ENCODE measurements at regions of chr1 and their contacts with region 1.

Region 1: DNA sequence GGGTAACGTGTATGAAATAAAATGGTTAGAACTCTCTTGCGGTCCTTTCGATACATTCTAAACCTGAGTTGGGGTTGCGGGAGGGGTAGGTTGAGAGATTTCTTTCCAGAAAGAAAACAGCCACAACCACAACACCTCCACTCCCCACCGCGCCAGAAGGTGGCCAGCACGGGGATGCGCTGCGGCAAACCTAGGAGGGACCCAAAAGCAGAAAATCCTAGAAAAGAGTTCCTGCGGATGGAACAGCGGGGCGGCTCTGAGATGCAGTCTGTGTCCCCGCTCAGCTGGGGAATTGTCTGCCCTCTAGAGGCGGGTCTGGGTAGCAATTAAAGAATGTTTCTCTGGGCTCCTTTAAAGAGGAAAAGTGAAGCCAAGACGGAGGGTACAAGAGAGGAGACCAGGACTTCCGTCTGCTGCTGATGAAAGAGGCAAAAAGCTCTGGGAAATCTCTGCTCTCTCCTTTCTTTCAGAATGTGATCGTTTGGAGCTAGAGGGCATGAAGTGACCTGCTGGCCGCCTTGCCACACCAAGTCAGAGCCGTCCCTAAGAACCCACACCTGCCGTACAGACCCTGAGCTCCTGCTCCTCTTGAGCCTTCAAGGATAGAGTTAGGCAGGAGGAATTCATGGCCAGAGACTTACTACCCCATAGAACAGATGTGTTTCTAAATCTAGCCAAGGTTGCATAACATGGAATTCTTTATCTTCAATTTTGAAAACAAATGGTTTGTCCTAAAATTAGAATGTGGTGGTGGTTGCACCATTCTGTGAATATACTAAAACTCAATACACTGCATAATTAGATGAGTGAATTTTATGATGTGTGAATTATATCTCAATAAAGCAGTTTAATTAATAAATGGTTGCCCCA is 46.5 kb upstream of the COA6 start:
- DNase-seq: peak; percentile 45 to 86 (median 71)
- ATAC-seq: peak; percentile 91
- H3K4me3 ChIP-seq: peak overlapping the region; percentile 73
- H3K4me3 Mint-ChIP-seq: peak overlapping the region; percentile 93
- H3K27ac ChIP-seq: peak overlapping the region; percentile 24 to 72
- H3K27ac Mint-ChIP-seq: peak overlapping the region; percentile 85
- H3K4me1 ChIP-seq: peaks cover 12% of the 10 kb centered on the region
- H3K4me1 Mint-ChIP-seq: peaks cover 25% of the 10 kb centered on the region
- H3K27me3 ChIP-seq: peaks cover 0 to 6% of the 10 kb centered on the region in 2 experiments
- H3K27me3 Mint-ChIP-seq: peaks cover 14% of the 10 kb centered on the region
- CTCF ChIP-seq: peak; percentile 87

Region 2: DNA sequence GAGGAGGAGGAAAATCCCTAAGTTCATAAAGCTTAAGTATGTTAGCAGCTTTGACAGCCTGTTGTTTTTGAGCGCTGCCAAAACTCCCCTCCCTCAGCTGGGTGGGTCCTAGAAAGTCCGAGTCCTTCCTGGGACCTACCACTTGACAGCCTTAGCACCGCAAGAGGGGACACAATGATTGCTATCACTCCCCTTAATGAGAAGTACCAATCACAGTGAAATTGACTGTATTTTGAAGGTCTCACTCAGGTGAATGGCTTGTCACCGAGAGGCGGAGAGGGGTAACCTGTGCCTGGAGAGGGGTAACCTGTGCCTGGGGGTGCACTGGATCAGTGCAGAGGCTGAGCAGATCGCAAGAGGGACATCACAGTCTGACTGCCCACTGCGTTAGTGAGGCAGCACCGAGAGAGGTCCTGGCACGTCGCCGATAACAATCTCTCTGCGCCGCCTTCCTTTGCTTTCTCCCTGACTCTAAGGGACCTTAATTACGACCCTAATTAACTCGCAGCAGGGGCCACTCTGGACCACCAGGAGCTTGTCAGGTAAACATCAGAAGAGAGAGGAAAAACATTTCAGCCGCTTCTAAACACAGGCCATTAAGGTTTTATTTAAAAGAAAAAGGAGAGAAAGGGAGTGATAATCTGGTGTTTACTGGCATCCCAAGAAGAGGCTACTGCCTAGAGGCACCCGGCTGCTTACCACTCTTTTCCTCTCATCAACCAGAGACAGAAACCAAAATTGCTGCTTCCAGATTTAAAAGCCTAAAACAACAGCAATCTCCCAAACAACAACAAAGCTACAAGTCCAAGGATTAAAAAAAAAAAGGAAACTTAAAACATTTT is 738.6 kb before region 1 on chr1:
- CTCF ChIA-PET with region 1: no interaction called
- POLR2A ChIA-PET with region 1: no interaction called
- intact Hi-C with region 1: no loop called
- DNase-seq: no peak
- ATAC-seq: no peak
- H3K4me3 ChIP-seq: no peak overlapping the region
- H3K4me3 Mint-ChIP-seq: no peak overlapping the region
- H3K27ac ChIP-seq: no peak overlapping the region
- H3K27ac Mint-ChIP-seq: no peak overlapping the region
- H3K4me1 ChIP-seq: no peaks in the 10 kb centered on the region
- H3K4me1 Mint-ChIP-seq: no peaks in the 10 kb centered on the region
- H3K27me3 ChIP-seq: peaks cover 8 to 9% of the 10 kb centered on the region in 2 experiments
- H3K27me3 Mint-ChIP-seq: peaks cover 26% of the 10 kb centered on the region
- CTCF ChIP-seq: no peak

Region 3: GRCh38 chr1:234154320-234155251 is 172.1 kb before region 1 on chr1:
- CTCF ChIA-PET with region 1: interaction called, 3 read pairs
- POLR2A ChIA-PET with region 1: no interaction called
- intact Hi-C with region 1: loop called (anchors 1 to 5 kb)
- DNase-seq: peak in 6 of 14 experiments; percentile 3 to 71 (median 30)
- ATAC-seq: no peak
- H3K4me3 ChIP-seq: no peak overlapping the region
- H3K4me3 Mint-ChIP-seq: no peak overlapping the region
- H3K27ac ChIP-seq: no peak overlapping the region
- H3K27ac Mint-ChIP-seq: no peak overlapping the region
- H3K4me1 ChIP-seq: no peaks in the 10 kb centered on the region
- H3K4me1 Mint-ChIP-seq: no peaks in the 10 kb centered on the region
- H3K27me3 ChIP-seq: peaks cover 0 to 7% of the 10 kb centered on the region in 2 experiments
- H3K27me3 Mint-ChIP-seq: peaks cover 9% of the 10 kb centered on the region
- CTCF ChIP-seq: peak; percentile 91

Region 4: DNA sequence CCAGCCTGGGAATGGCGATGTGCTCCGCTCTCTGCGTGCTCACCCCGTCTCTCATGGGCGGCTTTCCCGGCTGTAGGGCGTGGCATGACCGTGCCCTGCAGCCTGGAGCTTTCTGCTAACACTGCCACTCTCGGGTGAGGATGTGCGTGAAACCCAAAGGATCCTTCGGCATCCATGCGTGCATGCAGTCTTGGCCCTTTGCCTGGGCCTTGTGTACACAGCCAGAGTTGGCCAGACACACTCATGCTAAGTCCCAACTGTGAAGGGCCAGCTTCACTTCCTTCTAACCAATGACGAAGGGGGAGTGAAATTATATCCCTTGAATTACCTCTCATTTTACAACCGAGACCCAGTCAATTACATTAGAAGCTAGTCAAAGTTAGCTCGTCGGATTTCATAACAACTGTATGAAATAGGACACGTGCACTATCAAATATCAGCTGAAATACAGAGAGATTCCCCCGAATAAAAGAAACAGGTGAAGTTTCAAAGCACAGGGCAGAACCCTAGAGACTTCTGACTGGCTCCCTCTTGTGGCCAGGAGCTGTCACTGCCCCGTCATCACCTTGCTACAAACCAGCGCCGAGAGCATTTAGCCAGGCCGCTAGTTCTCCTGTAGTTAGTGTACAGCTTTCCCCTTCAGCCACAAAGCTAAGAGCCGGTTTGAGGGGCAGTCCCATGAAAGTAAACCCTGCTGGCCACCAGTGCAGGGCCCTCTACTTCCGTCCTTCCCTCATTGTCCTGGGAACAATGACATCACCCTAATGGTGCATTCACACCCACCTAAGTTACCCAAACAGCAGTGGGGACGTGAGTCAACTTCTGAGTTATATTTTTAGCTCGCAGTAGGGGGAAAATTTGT is 16.9 kb before region 1 on chr1:
- CTCF ChIA-PET with region 1: interaction called, 156 read pairs
- POLR2A ChIA-PET with region 1: interaction called, 9 read pairs
- intact Hi-C with region 1: loop called in 1 of 2 experiments (anchors 1 kb)
- DNase-seq: peak; percentile 55 to 89 (median 69)
- ATAC-seq: peak; percentile 96
- H3K4me3 ChIP-seq: no peak overlapping the region
- H3K4me3 Mint-ChIP-seq: no peak overlapping the region
- H3K27ac ChIP-seq: no peak overlapping the region
- H3K27ac Mint-ChIP-seq: peak overlapping the region; percentile 43
- H3K4me1 ChIP-seq: peaks cover 38% of the 10 kb centered on the region
- H3K4me1 Mint-ChIP-seq: peaks cover 18% of the 10 kb centered on the region
- H3K27me3 ChIP-seq: no peaks in the 10 kb centered on the region
- H3K27me3 Mint-ChIP-seq: no peaks in the 10 kb centered on the region
- CTCF ChIP-seq: peak; percentile 95

Region 5: DNA sequence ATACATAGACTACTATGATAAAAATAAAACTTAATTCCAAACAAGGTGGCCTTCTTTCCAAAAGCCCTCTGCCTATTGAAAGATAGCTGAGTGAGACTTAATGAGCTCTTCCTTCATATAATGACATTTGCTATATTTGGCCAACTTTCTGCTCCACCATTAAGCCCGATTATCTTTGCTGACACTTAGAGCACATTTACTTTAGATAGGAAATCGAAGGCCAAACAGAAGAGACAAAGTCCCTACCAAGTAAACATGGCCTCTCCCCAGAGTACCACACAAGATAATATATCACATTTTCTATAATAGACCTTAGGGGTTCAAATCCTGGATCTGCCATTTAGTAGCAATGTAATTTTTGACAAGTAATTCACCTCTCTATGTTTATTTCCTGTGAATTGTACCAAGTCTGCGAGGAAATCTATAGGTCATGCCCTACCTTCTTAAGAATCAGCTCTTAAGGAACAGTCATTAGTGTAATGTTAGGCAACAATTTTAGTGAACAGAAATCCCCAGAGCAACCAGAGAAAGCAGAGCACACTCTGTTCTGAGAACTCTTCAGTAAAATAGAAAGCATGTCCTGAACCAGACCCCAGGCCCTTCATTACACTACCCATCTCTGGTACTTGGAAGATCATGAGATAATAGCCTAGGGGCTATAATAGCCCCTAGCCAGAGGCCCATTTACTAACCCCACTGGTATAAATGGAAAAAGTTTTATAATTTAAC is 29.2 kb after region 1 on chr1:
- CTCF ChIA-PET with region 1: interaction called, 10 read pairs
- POLR2A ChIA-PET with region 1: interaction called, 3 read pairs
- intact Hi-C with region 1: no loop called
- DNase-seq: no peak
- ATAC-seq: no peak
- H3K4me3 ChIP-seq: peak overlapping the region; percentile 56
- H3K4me3 Mint-ChIP-seq: no peak overlapping the region
- H3K27ac ChIP-seq: no peak overlapping the region
- H3K27ac Mint-ChIP-seq: peak overlapping the region; percentile 80
- H3K4me1 ChIP-seq: no peaks in the 10 kb centered on the region
- H3K4me1 Mint-ChIP-seq: no peaks in the 10 kb centered on the region
- H3K27me3 ChIP-seq: no peaks in the 10 kb centered on the region
- H3K27me3 Mint-ChIP-seq: no peaks in the 10 kb centered on the region
- CTCF ChIP-seq: no peak